ENCODE measurements at regions of chr12 and their contacts with region 1.

Region 1: GRCh38 chr12:27462151-27462694 is 15.7 kb downstream of the SMCO2 start:
- DNase-seq: no peak
- H3K4me3 Mint-ChIP-seq: peak overlapping the region; percentile 53
- H3K27ac Mint-ChIP-seq: peak overlapping the region; percentile 84
- H3K4me1 Mint-ChIP-seq: peaks cover 69% of the 10 kb centered on the region
- H3K27me3 Mint-ChIP-seq: no peaks in the 10 kb centered on the region

Region 2: GRCh38 chr12:27498149-27498548 is 35.9 kb after region 1 on chr12:
- intact Hi-C with region 1: loop called (anchors 1 kb)
- DNase-seq: peak; percentile 16
- H3K4me3 Mint-ChIP-seq: peak overlapping the region; percentile 3
- H3K27ac Mint-ChIP-seq: peak overlapping the region; percentile 76
- H3K4me1 Mint-ChIP-seq: peaks cover 53% of the 10 kb centered on the region
- H3K27me3 Mint-ChIP-seq: no peaks in the 10 kb centered on the region

Region 3: DNA sequence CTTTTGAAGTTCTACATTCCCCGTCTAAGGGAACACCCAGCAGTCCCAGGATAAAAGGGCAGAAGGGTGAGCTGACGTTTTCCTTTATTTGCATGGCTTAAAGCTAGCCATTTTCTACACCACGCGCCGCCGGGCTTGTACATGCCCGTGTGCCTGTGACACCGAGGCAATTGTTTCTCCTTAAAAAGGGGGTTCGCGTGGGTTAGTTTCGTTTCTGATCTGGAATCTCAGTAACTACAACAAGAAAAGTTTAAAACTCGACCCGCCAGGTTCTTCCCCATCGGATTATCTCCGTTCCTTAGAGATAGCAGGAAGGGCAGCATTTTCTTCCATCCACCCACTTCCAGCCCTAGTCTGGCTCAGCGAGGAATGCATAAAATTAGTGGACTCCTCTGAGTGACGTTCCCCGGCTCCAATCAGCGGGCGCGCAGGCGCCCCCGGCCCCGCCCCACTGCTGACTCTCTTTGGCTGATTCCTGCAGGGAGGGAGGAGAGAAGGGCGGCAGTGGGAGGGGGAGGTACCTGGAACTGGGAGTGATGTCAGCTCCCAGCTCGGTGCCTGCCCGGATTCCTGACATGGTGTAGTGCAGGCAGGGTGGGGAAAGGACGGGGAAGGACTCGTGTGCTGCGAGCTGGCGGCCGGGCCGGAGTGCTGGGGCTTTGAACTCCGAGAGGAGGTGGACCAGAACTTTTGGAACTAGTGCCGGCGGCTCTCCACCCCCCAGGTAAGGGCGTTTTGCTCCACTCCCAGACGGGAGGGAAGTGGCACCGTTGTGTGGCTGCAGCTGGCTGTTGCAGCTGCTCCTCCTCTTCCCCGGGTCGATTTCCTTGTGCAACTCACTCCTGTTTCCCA is 61.6 kb after region 1 on chr12 and contains the start of gene PPFIBP1:
- intact Hi-C with region 1: loop called (anchors 1 kb)
- DNase-seq: peak; percentile 83
- H3K4me3 Mint-ChIP-seq: peak within 1 kb of the TSS; percentile 89
- H3K27ac Mint-ChIP-seq: peak within 1 kb of the TSS; percentile 90
- H3K4me1 Mint-ChIP-seq: peaks cover 56% of the 10 kb centered on the region
- H3K27me3 Mint-ChIP-seq: peaks cover 19% of the 10 kb centered on the region
- total RNA-seq, gene PPFIBP1: 53.8 and 55.7 TPM in 2 replicates

Region 4: GRCh38 chr12:27635349-27635972 is 173.2 kb after region 1 on chr12:
- intact Hi-C with region 1: loop called (anchors 5 kb)
- DNase-seq: no peak
- H3K4me3 Mint-ChIP-seq: no peak overlapping the region
- H3K27ac Mint-ChIP-seq: no peak overlapping the region
- H3K4me1 Mint-ChIP-seq: peaks cover 39% of the 10 kb centered on the region
- H3K27me3 Mint-ChIP-seq: peaks cover 2% of the 10 kb centered on the region

Measured in activated T-helper 1 cell treated with anti-CD3 and anti-CD28 coated beads, Interleukin-12 subunit alpha, Interleukin-12 subunit beta, Interleukin-2, Interleukin-4 antibody, amounts not matched to agents 30 ng/mL and 10 ng/mL and 1 ng/mL, durations not matched to agents 14 hours and 24 hours and 36 hours (primary cell).